ENCODE measurements at regions of chr15 and their contacts with region 1.

Region 1: DNA sequence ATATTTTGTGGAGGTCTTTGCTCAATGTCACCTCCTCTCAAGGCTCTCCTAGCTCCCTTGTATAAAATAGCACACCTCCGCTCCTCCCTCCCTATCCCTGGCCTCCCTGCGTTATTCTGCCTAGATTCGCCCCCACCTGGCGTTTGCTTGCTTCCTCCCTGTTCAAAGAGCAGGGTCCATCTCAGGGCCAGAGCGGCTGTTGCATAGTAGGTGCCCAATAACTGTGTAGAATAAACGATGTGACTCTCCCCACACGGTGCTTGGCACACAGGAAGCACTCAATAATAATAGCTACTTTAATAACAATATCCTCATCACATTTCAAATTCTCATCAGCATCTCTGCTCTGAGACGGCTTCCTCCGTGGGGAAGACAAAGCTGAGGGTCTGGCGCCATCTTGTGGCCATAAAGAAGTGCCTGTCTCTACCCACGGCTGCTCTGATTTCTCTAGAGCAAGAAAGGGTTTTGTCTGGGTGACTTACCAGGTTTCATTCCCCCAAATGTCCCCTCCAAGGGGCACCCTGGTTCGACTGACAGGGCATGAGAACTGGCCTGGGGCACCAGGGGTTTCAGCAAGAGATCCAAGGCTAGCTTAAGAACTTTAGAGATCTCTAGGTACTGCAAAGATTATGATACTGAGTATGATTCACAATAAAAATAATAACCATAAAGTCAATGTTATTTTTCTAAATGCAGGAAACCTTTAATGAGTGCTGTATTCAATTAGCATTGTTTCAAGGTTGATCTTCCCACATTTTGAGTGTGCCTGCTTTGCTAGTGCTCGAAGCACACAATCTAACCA is 16.1 kb downstream of the CD276 start:
- DNase-seq: peak; percentile 87
- H3K4me3 ChIP-seq: no peak overlapping the region
- H3K27ac ChIP-seq: no peak overlapping the region
- H3K4me1 ChIP-seq: peaks cover 18 to 45% (median 33%) of the 10 kb centered on the region in 6 donors
- H3K27me3 ChIP-seq: peaks cover 0 to 44% (median 0%) of the 10 kb centered on the region in 7 donors
- CTCF ChIP-seq: peak; percentile 75 to 95 (median 89)
- POLR2A ChIP-seq: no peak

Region 2: DNA sequence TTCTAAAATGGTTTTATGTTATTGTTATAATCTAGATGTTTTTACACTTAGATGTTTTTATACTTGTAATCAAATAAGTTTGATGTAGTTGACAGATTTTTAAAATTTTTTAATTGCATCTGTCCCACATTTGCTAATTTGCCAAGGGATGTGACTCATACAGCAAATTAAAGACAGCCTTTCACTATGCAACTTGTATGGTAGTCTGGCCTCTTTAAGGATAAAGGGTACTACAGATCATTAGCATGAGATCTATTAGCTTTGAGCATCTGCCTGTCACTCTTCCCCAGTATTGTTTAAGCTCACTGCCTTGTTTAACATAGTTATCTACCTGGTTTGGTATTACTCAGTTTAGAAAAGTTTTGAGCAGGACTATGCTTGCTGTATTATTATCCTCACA is 150.1 kb before region 1 on chr15:
- intact Hi-C with region 1: loop called (anchors 5 kb)
- DNase-seq: no peak
- H3K4me3 ChIP-seq: no peak overlapping the region
- H3K27ac ChIP-seq: no peak overlapping the region
- H3K4me1 ChIP-seq: peaks cover 0 to 12% (median 2%) of the 10 kb centered on the region in 6 donors
- H3K27me3 ChIP-seq: no peaks in the 10 kb centered on the region
- CTCF ChIP-seq: no peak
- POLR2A ChIP-seq: no peak

Measured in spleen (tissue), 13 donors.